ENCODE measurements at regions of chr11 and their contacts with region 1.

Region 1: GRCh38 chr11:8964324-8965320 is at the start of gene TMEM9B:
- DNase-seq: peak; percentile 56 to 92
- H3K4me3 ChIP-seq: peak within 1 kb of the TSS; percentile 64 to 86 (median 68)
- H3K27ac ChIP-seq: peak within 1 kb of the TSS; percentile 53; the same call in 1 of the 2 replicates
- H3K4me1 ChIP-seq: peaks cover 0 to 4% (median 2%) of the 10 kb centered on the region in 4 experiments; a peak in 3 of 7 replicates
- H3K27me3 ChIP-seq: no peaks in the 10 kb centered on the region
- CTCF ChIP-seq: no peak
- EP300 ChIP-seq: no peak
- POLR2A ChIP-seq: peak; percentile 53 to 91
- RAD21 ChIP-seq: no peak; a peak in 1 of 4 replicates
- total RNA-seq, gene TMEM9B: 9.4 and 10.0 TPM in 2 replicates

Region 2: DNA sequence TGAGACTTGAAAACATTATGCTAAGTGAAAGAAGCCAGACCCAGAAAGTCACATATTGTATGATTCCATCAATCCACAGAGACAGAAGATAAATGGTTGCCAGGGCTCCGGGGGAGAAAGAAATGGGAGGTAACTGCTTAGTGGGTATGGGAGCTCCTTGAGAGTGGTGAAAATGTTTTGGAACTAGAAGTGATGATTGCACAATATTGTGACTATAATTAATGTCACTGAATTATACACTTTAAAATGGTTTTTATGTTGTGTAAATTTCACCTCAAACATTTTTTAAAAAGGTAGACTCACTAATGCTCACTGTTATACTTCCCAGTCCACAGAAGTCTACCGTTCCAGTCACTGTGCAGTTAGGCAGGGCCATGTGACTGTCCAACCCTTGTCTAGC is 85.9 kb before region 1 on chr11:
- CTCF ChIA-PET with region 1: no interaction called
- POLR2A ChIA-PET with region 1: no interaction called
- DNase-seq: no peak
- H3K4me3 ChIP-seq: no peak overlapping the region
- H3K27ac ChIP-seq: no peak overlapping the region
- H3K4me1 ChIP-seq: no peaks in the 10 kb centered on the region
- H3K27me3 ChIP-seq: peaks cover 0 to 1% (median 0%) of the 10 kb centered on the region in 4 experiments; a peak in 1 of 7 replicates
- CTCF ChIP-seq: no peak
- EP300 ChIP-seq: no peak
- POLR2A ChIP-seq: no peak
- RAD21 ChIP-seq: no peak

Region 3: GRCh38 chr11:8911029-8911826 is 53.4 kb before region 1 on chr11 and contains the start of gene AKIP1:
- CTCF ChIA-PET with region 1: interaction called, 66 read pairs
- POLR2A ChIA-PET with region 1: interaction called, 8 read pairs
- DNase-seq: peak; percentile 94 to 96
- H3K4me3 ChIP-seq: peak within 1 kb of the TSS; percentile 74 to 90 (median 83)
- H3K27ac ChIP-seq: peak within 1 kb of the TSS; percentile 55
- H3K4me1 ChIP-seq: peaks cover 0 to 8% (median 1%) of the 10 kb centered on the region in 4 experiments; a peak in 5 of 7 replicates
- H3K27me3 ChIP-seq: peaks cover 0 to 12% (median 5%) of the 10 kb centered on the region in 4 experiments; a peak in 3 of 7 replicates
- CTCF ChIP-seq: no peak
- EP300 ChIP-seq: 0 out of 3 replicates have a peak, but pooled peaks of 1 of the 2 experiments have one; percentile 4
- POLR2A ChIP-seq: peak in 1 of 2 experiments; percentile 14; a peak in 2 of 3 replicates
- RAD21 ChIP-seq: no peak
- total RNA-seq, gene AKIP1: 17.8 and 19.9 TPM in 2 replicates

Region 4: DNA sequence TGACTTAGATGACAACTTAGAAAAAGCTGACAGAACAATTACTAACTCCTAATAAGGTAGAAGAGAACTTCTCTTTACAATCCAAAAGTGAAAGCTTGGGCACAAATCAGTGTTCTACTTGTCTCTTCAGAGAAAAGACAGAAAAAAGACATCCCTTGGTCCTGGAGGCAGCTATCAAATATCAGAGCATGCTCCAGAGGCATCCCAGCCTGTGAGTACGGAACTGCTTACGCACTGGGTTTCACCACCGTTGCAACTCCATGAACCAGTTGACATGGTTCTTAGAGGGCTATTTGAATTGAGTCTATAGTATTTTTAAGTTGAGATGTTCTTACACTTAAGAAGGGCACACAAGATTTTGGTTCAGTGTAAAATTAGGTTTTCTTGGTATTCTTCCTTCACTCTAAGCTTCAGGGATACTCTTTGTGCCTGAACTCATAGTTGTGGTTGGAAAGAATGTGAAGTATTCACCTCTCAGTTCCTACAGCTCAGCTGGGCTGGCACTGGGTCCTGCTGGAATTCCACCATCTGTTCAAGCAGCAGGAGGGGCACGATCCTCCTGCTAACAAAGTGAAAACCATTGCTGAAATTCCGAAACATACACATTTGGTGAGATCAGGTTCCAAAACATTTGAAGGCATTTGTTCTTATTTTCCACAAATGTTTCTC is 47.3 kb before region 1 on chr11:
- CTCF ChIA-PET with region 1: interaction called, 66 read pairs
- POLR2A ChIA-PET with region 1: interaction called, 7 read pairs
- DNase-seq: no peak
- H3K4me3 ChIP-seq: peak overlapping the region in 1 of 4 experiments; percentile 28; a peak in 1 of 8 replicates
- H3K27ac ChIP-seq: no peak overlapping the region
- H3K4me1 ChIP-seq: peaks cover 0 to 7% (median 4%) of the 10 kb centered on the region in 4 experiments; a peak in 5 of 7 replicates
- H3K27me3 ChIP-seq: no peaks in the 10 kb centered on the region
- CTCF ChIP-seq: no peak
- EP300 ChIP-seq: no peak
- POLR2A ChIP-seq: no peak
- RAD21 ChIP-seq: no peak

Region 5: GRCh38 chr11:8922691-8923090 is 41.9 kb before region 1 on chr11:
- CTCF ChIA-PET with region 1: interaction called, 14 read pairs
- POLR2A ChIA-PET with region 1: interaction called, 4 read pairs
- DNase-seq: no peak
- H3K4me3 ChIP-seq: no peak overlapping the region
- H3K27ac ChIP-seq: no peak overlapping the region
- H3K4me1 ChIP-seq: no peaks in the 10 kb centered on the region
- H3K27me3 ChIP-seq: no peaks in the 10 kb centered on the region
- CTCF ChIP-seq: no peak
- EP300 ChIP-seq: no peak
- POLR2A ChIP-seq: no peak
- RAD21 ChIP-seq: no peak

Region 6: GRCh38 chr11:8934749-8935478 is 29.7 kb before region 1 on chr11:
- CTCF ChIA-PET with region 1: interaction called, 15 read pairs
- POLR2A ChIA-PET with region 1: interaction called, 4 read pairs
- DNase-seq: no peak
- H3K4me3 ChIP-seq: no peak overlapping the region
- H3K27ac ChIP-seq: no peak overlapping the region
- H3K4me1 ChIP-seq: peaks cover 0 to 8% (median 1%) of the 10 kb centered on the region in 4 experiments; a peak in 2 of 7 replicates
- H3K27me3 ChIP-seq: no peaks in the 10 kb centered on the region
- CTCF ChIP-seq: no peak
- EP300 ChIP-seq: no peak
- POLR2A ChIP-seq: no peak
- RAD21 ChIP-seq: no peak